ENCODE measurements at regions of chr16 and their contacts with region 1.

Region 1: GRCh38 chr16:22188595-22189442 is 17.3 kb upstream of the EEF2K start:
- DNase-seq: peak; percentile 61
- ATAC-seq: no peak

Region 2: DNA sequence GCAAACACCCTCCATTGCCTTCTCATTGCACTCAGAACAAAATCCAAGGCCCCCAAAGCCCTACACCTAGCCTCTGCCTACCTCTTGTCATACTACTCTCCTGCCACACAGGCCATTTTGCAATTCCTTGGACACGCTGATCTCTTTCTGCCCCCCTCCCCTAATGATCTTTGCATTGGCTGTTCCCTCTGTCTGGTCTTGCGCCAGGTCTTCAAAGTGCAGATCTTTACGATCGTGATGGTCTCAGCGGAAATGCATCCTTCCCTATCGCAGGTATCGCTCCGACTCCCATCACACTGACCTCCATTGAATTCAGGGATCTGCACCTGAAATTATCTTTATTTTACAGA is 181.7 kb before region 1 on chr16:
- intact Hi-C with region 1: no loop called
- DNase-seq: no peak
- ATAC-seq: no peak

Region 3: DNA sequence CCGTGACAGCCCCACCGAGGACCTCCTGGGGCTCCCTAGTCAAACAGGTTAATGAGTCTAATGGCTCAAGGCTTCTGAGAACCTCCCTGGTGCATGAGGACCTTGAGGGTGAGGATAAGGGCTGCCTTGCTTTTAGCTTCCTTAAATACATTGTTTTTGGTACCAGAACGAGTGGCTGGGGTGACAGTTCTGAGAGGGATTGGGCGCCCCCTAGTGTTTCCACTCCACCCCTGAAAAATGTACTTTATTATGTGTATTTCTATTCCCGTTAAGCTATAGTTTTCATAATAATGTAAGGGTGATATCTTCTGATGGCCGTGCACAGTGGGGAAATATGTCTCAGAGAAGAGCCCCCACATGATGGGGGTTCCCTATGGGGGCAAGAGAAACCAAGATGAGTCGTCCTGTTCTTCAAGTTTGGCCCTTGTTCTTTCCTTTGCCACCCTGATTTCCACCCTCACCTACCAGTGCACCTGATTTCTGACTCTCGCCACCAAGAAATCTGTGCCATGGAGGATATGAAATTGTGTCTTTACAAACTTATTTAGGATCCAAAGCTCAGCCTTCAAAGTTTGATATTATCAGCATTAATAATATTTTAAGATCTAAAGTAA is 111.0 kb before region 1 on chr16:
- intact Hi-C with region 1: loop called (anchors 10 kb)
- DNase-seq: peak; percentile 67
- ATAC-seq: peak; percentile 49